Left ventricle myocardium inferior (tissue), 1 donor: ENCODE measurements at regions of chr3 and their contacts with region 1.

Region 1: DNA sequence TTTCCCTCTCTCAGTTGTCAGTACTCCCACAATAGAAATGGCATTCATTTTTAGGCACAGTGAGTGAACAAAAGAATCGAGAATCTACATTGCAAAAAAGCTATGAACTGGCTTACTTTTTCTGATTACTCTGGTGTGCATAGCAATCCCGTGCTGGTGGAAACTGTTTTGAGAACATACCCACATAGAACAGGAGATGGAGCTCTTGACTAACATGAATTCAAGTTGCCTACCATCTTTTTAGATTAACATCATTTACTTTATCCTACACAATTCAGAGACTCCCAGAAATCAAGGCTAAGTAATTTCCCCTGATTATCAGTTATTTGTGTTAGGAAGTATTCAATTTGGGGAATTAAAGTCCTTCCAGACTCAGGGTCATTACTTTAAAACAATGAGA is 326.6 kb downstream of the ARPP21 start:
- DNase-seq: no peak
- H3K4me3 ChIP-seq: no peak overlapping the region
- H3K27ac ChIP-seq: no peak overlapping the region
- H3K4me1 ChIP-seq: peaks cover 15% of the 10 kb centered on the region
- H3K27me3 ChIP-seq: no peaks in the 10 kb centered on the region
- CTCF ChIP-seq: peak; percentile 71

Region 2: GRCh38 chr3:36700537-36701248 is 734.8 kb after region 1 on chr3:
- intact Hi-C with region 1: loop called (anchors 5 kb)
- DNase-seq: peak; percentile 36
- H3K4me3 ChIP-seq: no peak overlapping the region
- H3K27ac ChIP-seq: no peak overlapping the region
- H3K4me1 ChIP-seq: no peaks in the 10 kb centered on the region
- H3K27me3 ChIP-seq: no peaks in the 10 kb centered on the region
- CTCF ChIP-seq: peak; percentile 81